ENCODE measurements at regions of chr19 and their contacts with region 1.

Region 1: GRCh38 chr19:54189735-54190502 is 539 bp upstream of the MBOAT7 start:
- DNase-seq: peak; percentile 100
- H3K4me3 ChIP-seq: peak overlapping the region in 2 of 3 experiments; percentile 72 to 87
- H3K27ac ChIP-seq: peak overlapping the region; percentile 86
- H3K4me1 ChIP-seq: peaks cover 16% of the 10 kb centered on the region
- H3K27me3 ChIP-seq: no peaks in the 10 kb centered on the region
- CTCF ChIP-seq: no peak
- POLR2A ChIP-seq: peak; percentile 47

Region 2: DNA sequence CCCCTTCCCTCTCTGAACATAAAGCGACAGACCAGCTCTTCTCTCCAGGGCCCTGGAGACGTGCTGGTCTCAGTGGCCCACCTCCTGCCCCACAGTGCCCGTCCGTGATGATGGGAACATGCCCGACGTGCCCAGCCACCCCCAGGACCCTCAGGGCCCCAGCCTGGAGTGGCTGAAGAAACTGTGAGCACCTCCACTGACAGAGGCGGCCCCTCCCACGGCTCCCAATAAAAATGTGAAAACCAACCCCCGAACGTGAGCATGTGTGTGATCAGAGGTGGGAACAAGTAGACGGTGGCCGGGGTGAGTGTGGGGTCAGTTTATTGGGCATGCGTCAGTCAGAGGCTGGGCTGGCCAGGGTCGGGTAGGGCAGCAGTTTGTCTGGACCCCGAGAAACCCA is 83.2 kb before region 1 on chr19:
- CTCF ChIA-PET with region 1: no interaction called
- POLR2A ChIA-PET with region 1: no interaction called
- dilution Hi-C with region 1: no loop called
- intact Hi-C with region 1: no loop called
- DNase-seq: no peak
- H3K4me3 ChIP-seq: no peak overlapping the region
- H3K27ac ChIP-seq: no peak overlapping the region
- H3K4me1 ChIP-seq: no peaks in the 10 kb centered on the region
- H3K27me3 ChIP-seq: no peaks in the 10 kb centered on the region
- CTCF ChIP-seq: no peak
- POLR2A ChIP-seq: no peak

Region 3: GRCh38 chr19:54137086-54137921 is 52.6 kb before region 1 on chr19 and contains the start of gene CNOT3:
- CTCF ChIA-PET with region 1: no interaction called
- POLR2A ChIA-PET with region 1: interaction called, 7 read pairs
- dilution Hi-C with region 1: no loop called
- intact Hi-C with region 1: loop called (anchors 1 kb)
- DNase-seq: peak; percentile 100
- H3K4me3 ChIP-seq: peak within 1 kb of the TSS; percentile 66 to 98 (median 69)
- H3K27ac ChIP-seq: peak within 1 kb of the TSS; percentile 71
- H3K4me1 ChIP-seq: peaks cover 17% of the 10 kb centered on the region
- H3K27me3 ChIP-seq: no peaks in the 10 kb centered on the region
- CTCF ChIP-seq: no peak
- POLR2A ChIP-seq: peak; percentile 72
- total RNA-seq, gene CNOT3: 62.4 and 74.7 TPM in 2 replicates

Region 4: DNA sequence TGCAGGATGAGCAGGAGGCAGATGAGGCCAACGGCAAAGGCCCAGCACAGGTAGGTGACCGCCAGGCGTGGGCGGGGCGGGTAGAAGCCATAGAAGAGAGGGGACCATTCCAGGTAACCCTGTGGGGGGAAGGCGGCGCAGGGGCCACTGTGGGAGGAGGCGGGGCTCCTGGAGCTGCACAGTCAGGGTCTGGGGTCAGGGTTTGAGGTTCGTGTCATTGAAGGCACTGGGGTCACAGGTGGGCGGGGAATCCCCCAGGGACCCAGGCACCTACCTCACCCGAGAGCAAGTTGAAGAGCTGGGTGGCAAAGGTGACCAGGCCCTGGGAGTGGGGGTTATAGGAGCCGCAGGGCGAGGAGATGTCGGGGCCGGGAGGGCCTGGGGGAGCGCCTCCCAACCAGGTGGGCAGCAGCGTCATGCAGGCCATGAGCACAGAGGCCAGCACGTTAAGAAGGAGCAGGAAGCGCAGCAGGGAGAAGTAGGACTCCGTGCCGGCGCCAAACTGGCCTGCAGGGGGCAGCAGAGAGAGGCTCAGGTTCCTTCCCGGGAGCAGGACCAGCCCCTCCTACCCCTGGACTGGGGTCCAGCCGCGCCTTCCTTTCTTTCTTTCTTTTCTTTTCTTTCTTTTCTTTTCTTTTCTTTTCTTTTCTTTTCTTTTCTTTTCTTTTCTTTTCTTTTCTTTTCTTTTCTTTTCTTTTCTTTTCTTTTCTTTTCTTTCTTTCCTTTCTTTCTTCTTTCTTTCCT is 21.6 kb before region 1 on chr19:
- CTCF ChIA-PET with region 1: interaction called, 25 read pairs
- POLR2A ChIA-PET with region 1: interaction called, 3 read pairs
- dilution Hi-C with region 1: no loop called
- intact Hi-C with region 1: loop called (anchors 1 kb)
- DNase-seq: peak; percentile 82
- H3K4me3 ChIP-seq: no peak overlapping the region
- H3K27ac ChIP-seq: no peak overlapping the region
- H3K4me1 ChIP-seq: no peaks in the 10 kb centered on the region
- H3K27me3 ChIP-seq: peaks cover 0 to 8% of the 10 kb centered on the region in 2 experiments
- CTCF ChIP-seq: peak; percentile 82 to 96
- POLR2A ChIP-seq: no peak

Region 5: DNA sequence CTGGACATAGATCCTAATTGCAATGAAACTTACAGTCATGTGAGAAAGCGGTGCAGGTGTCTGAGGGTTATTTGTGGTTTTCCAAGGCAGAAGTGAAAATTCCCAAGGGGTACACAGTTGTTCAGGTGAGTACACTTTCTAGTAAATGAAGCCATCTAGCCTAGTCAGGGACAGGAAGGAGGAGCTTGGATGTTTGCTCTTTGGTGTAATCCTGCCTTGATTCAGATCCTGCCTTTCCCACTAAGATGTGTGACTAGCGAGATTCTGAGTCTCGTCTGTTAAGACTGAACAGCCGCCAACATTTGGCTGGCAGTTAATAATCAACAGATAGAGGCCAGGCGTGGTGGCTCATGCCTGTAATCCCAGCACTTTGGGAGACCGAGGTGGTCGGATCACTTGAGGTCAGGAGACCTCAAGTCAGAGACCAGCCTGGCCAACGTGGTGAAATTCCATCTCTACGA is 13.3 kb after region 1 on chr19:
- CTCF ChIA-PET with region 1: interaction called, 8 read pairs
- POLR2A ChIA-PET with region 1: interaction called, 91 read pairs
- dilution Hi-C with region 1: no loop called
- intact Hi-C with region 1: loop called (anchors 1 kb)
- DNase-seq: no peak
- H3K4me3 ChIP-seq: peak overlapping the region in 1 of 3 experiments; percentile 97
- H3K27ac ChIP-seq: no peak overlapping the region
- H3K4me1 ChIP-seq: peaks cover 42% of the 10 kb centered on the region
- H3K27me3 ChIP-seq: no peaks in the 10 kb centered on the region
- CTCF ChIP-seq: no peak
- POLR2A ChIP-seq: no peak

Region 6: GRCh38 chr19:54218960-54219661 is 29.2 kb after region 1 on chr19:
- CTCF ChIA-PET with region 1: no interaction called
- POLR2A ChIA-PET with region 1: no interaction called
- dilution Hi-C with region 1: no loop called
- intact Hi-C with region 1: no loop called
- DNase-seq: no peak
- H3K4me3 ChIP-seq: no peak overlapping the region
- H3K27ac ChIP-seq: no peak overlapping the region
- H3K4me1 ChIP-seq: no peaks in the 10 kb centered on the region
- H3K27me3 ChIP-seq: no peaks in the 10 kb centered on the region
- CTCF ChIP-seq: no peak
- POLR2A ChIP-seq: no peak

Region 7: GRCh38 chr19:54473021-54473891 is 283.3 kb after region 1 on chr19 and contains the start of gene CDC42EP5:
- CTCF ChIA-PET with region 1: no interaction called
- POLR2A ChIA-PET with region 1: no interaction called
- dilution Hi-C with region 1: no loop called
- intact Hi-C with region 1: loop called (anchors 2 kb)
- DNase-seq: peak; percentile 90
- H3K4me3 ChIP-seq: peak within 1 kb of the TSS; percentile 60 to 70 (median 65)
- H3K27ac ChIP-seq: peak within 1 kb of the TSS; percentile 68
- H3K4me1 ChIP-seq: peaks cover 35% of the 10 kb centered on the region
- H3K27me3 ChIP-seq: no peaks in the 10 kb centered on the region
- CTCF ChIP-seq: no peak
- POLR2A ChIP-seq: no peak
- total RNA-seq, gene CDC42EP5: 73.8 and 85.5 TPM in 2 replicates

Measured in endothelial cell of umbilical vein (primary cell).